BJ (cell line): ENCODE measurements at regions of chr13 and their contacts with region 1.

Region 1: DNA sequence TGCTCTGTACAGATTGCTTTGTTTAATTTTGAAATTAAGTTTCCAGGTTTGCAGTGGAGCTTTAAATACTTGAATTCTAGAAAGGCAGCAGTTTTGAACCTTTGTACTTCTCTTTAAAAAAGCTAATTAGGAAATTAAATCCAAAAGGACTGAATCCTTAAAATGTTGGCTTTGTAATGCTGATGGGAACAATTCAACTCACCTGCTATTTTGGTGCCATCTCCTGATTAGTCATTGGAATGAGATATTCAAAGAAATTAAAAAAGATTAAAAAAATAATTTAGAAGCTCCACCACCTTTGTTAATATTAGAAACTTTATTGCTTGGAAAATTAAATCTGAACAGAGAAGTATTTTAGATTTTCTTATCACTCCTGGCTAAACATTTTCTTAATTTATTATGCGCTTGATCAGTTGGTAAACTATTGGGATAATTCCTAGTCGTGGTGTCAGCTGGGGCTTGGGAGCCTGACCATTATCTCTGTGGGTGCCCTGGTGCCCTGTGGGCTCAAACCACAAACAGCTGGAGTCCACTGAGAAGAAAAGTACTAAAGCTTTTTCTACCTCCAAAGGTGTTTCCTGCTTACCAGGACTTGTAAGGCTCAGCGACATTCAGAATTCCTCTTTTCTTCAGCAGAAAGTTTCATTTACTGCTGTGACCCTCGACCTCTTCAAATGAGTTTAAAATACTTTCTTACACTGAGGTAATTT is 540.4 kb downstream of the DIAPH3 start:
- DNase-seq: no peak
- H3K4me3 ChIP-seq: no peak overlapping the region
- H3K27me3 ChIP-seq: no peaks in the 10 kb centered on the region; the same call in 1 of the 2 replicates
- CTCF ChIP-seq: no peak

Region 2: GRCh38 chr13:59666504-59666903 is 43.1 kb after region 1 on chr13:
- CTCF ChIA-PET with region 1: no interaction called
- POLR2A ChIA-PET with region 1: interaction called, 10 read pairs
- DNase-seq: no peak
- H3K4me3 ChIP-seq: no peak overlapping the region
- H3K27me3 ChIP-seq: no peaks in the 10 kb centered on the region
- CTCF ChIP-seq: no peak